MCF 10A (cell line): ENCODE measurements at regions of chr10 and their contacts with region 1.

Region 1: DNA sequence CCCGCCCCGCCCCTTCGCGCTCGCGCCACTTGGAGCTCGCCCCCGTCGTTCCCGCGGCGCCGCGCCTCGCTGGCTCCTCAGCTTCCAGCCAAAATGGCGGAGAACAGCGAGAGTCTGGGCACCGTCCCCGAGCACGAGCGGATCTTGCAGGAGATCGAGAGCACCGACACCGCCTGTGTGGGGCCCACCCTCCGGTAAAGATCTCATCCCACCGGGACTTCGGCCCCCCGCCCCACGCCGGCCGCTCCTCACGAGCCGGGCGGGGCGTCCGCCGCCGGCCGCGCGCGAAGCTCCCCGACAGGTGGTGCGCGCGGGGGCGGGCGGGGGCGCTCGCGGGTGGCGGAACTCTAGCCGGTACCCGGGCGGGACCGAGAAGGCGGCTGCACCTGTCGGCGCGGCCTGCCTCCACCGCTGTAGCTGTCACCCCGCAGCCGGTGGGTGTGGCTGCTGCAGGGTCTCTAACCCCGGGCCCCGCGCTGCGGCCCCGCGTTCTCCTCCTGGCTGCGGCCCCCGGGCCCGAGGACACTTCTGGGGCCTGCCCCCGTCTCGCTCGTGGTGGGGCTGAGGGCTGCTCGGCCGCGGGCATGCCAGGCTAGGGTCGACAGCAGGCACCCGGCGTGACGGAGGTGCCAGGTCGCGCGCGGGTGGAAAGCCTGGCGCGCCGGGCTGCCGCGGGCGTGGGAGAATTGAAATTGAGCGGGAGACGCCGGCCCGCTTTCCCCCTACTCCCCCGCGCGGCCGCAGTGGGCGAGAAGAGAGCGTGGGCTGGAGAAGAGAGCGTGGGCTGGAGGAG is at the start of gene EXOC6:
- DNase-seq: peak; percentile 81
- H3K4me3 Mint-ChIP-seq: peak within 1 kb of the TSS; percentile 80
- H3K27ac Mint-ChIP-seq: peak within 1 kb of the TSS; percentile 59
- H3K4me1 Mint-ChIP-seq: peaks cover 12% of the 10 kb centered on the region
- H3K27me3 Mint-ChIP-seq: no peaks in the 10 kb centered on the region
- CTCF ChIP-seq: peak; percentile 14
- total RNA-seq, gene EXOC6: 5.9 and 6.6 TPM in 2 replicates

Region 2: GRCh38 chr10:92832998-92833650 is 15.5 kb before region 1 on chr10:
- CTCF ChIA-PET with region 1: interaction called, 17 read pairs
- POLR2A ChIA-PET with region 1: interaction called, 6 read pairs
- intact Hi-C with region 1: no loop called
- DNase-seq: no peak
- H3K4me3 Mint-ChIP-seq: no peak overlapping the region
- H3K27ac Mint-ChIP-seq: no peak overlapping the region
- H3K4me1 Mint-ChIP-seq: no peaks in the 10 kb centered on the region
- H3K27me3 Mint-ChIP-seq: no peaks in the 10 kb centered on the region
- CTCF ChIP-seq: no peak

Region 3: DNA sequence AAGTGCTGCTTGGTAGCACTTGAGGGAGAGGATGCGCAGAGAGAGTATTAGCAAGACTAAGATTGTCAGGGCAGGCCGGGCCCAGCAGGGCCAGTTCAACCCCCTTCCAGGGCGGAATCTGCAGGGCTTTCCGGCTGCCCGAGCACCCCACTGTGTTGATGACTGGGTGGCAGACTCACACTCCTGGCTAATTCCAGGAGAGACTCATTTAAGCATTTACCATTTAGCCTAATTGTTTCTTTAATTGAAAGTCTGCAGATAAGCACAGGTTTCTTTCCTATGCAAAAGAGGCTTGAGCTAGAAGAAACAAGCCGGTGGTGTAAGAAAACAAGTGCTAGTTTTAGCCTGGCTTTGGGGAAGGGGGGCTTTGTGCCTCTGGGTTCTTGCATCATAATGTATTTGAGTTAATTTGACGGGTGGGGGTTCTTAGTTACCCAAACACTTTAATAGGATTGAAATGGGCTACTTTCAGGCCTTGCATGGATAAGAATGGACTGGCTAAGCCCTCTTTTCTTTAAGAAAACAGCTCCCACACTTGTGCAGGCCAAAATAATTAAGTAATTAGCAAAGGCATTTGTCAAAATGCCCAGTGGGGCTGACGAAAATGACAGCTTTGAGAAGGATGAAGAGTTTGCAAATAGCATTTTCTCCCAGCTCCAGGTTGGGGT is 432.2 kb after region 1 on chr10:
- CTCF ChIA-PET with region 1: no interaction called
- POLR2A ChIA-PET with region 1: no interaction called
- intact Hi-C with region 1: no loop called
- DNase-seq: no peak
- H3K4me3 Mint-ChIP-seq: no peak overlapping the region
- H3K27ac Mint-ChIP-seq: no peak overlapping the region
- H3K4me1 Mint-ChIP-seq: no peaks in the 10 kb centered on the region
- H3K27me3 Mint-ChIP-seq: no peaks in the 10 kb centered on the region
- CTCF ChIP-seq: no peak